HCT116 (cell line): ENCODE measurements at regions of chr3 and their contacts with region 1.

Region 1: GRCh38 chr3:28028559-28028958 is 212.9 kb upstream of the CMC1 start:
- DNase-seq: no peak
- ATAC-seq: no peak
- H3K4me3 ChIP-seq: no peak overlapping the region
- H3K27ac ChIP-seq: no peak overlapping the region
- H3K4me1 ChIP-seq: no peaks in the 10 kb centered on the region
- H3K27me3 ChIP-seq: no peaks in the 10 kb centered on the region
- CTCF ChIP-seq: no peak
- POLR2A ChIP-seq: no peak
- RAD21 ChIP-seq: no peak

Region 2: GRCh38 chr3:28012830-28013229 is 15.7 kb before region 1 on chr3:
- CTCF ChIA-PET with region 1: no interaction called
- POLR2A ChIA-PET with region 1: no interaction called
- RAD21 ChIA-PET with region 1: no interaction called
- intact Hi-C with region 1: no loop called
- DNase-seq: no peak
- ATAC-seq: no peak
- H3K4me3 ChIP-seq: no peak overlapping the region
- H3K27ac ChIP-seq: no peak overlapping the region
- H3K4me1 ChIP-seq: no peaks in the 10 kb centered on the region
- H3K27me3 ChIP-seq: no peaks in the 10 kb centered on the region
- CTCF ChIP-seq: no peak
- POLR2A ChIP-seq: no peak
- RAD21 ChIP-seq: no peak

Region 3: GRCh38 chr3:28099296-28099695 is 70.7 kb after region 1 on chr3:
- CTCF ChIA-PET with region 1: no interaction called
- POLR2A ChIA-PET with region 1: no interaction called
- RAD21 ChIA-PET with region 1: no interaction called
- intact Hi-C with region 1: loop called (anchors 5 kb)
- DNase-seq: no peak
- ATAC-seq: no peak
- H3K4me3 ChIP-seq: no peak overlapping the region
- H3K27ac ChIP-seq: no peak overlapping the region
- H3K4me1 ChIP-seq: no peaks in the 10 kb centered on the region
- H3K27me3 ChIP-seq: no peaks in the 10 kb centered on the region
- CTCF ChIP-seq: no peak
- POLR2A ChIP-seq: no peak
- RAD21 ChIP-seq: no peak

Region 4: DNA sequence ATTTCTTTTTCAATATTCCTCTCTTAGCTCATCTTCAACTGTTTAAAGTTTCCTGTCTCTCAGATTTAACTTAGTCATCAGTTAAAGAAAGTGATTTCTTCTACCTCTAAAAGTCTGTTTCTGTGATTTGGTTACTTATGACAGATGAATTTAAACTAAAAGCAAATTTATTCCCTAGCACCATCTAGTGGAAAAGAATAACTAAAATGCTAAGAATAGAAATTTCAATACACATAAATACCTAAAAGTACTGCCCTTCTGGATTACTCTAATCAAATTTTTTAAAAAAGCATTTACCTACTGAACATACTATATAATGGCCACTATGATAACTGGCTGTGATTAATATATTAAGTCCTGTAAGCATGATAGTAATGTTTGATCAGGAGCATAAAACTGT is 306.0 kb after region 1 on chr3:
- CTCF ChIA-PET with region 1: no interaction called
- POLR2A ChIA-PET with region 1: no interaction called
- RAD21 ChIA-PET with region 1: no interaction called
- intact Hi-C with region 1: no loop called
- DNase-seq: no peak
- ATAC-seq: no peak
- H3K4me3 ChIP-seq: no peak overlapping the region
- H3K27ac ChIP-seq: no peak overlapping the region
- H3K4me1 ChIP-seq: no peaks in the 10 kb centered on the region
- H3K27me3 ChIP-seq: no peaks in the 10 kb centered on the region
- CTCF ChIP-seq: peak; percentile 3 to 42 (median 7); a peak in 3 of 6 replicates
- POLR2A ChIP-seq: no peak
- RAD21 ChIP-seq: peak; percentile 25; the same call in 1 of the 2 replicates